Prostate gland (tissue), 2 donors: ENCODE measurements at regions of chr9 and their contacts with region 1.

Region 1: GRCh38 chr9:76302947-76303940 is 91.0 kb downstream of the RFK start:
- DNase-seq: no peak
- H3K4me3 ChIP-seq: no peak overlapping the region
- H3K27ac ChIP-seq: no peak overlapping the region
- H3K4me1 ChIP-seq: no peaks in the 10 kb centered on the region
- H3K27me3 ChIP-seq: no peaks in the 10 kb centered on the region
- CTCF ChIP-seq: peak; percentile 40 to 84 (median 74)
- POLR2A ChIP-seq: no peak

Region 2: GRCh38 chr9:75265525-75265972 is 1037.7 kb before region 1 on chr9:
- intact Hi-C with region 1: loop called (anchors 5 kb)
- DNase-seq: peak; percentile 15
- H3K4me3 ChIP-seq: no peak overlapping the region
- H3K27ac ChIP-seq: no peak overlapping the region
- H3K4me1 ChIP-seq: no peaks in the 10 kb centered on the region
- H3K27me3 ChIP-seq: no peaks in the 10 kb centered on the region
- CTCF ChIP-seq: peak; percentile 60 to 88 (median 74)
- POLR2A ChIP-seq: no peak

Region 3: DNA sequence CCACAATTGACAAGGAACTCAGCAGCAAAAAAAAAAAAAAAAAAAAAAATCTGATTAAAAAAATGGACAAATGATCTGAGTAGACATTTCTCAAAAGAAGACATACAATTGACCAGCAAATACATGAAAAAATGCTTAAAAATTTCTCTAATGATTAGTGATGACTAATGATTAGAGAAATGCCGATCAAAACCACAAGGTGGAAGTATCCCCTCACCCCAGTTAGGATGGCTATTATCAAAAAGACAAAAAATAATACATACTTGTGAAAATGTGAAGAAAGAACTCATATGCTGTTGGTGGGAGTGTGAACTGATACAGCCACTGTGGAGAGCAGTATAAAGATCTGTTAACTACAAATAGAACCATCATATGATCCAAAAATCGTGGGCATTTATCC is 969.6 kb before region 1 on chr9:
- intact Hi-C with region 1: loop called (anchors 10 kb)
- DNase-seq: no peak
- H3K4me3 ChIP-seq: no peak overlapping the region
- H3K27ac ChIP-seq: no peak overlapping the region
- H3K4me1 ChIP-seq: no peaks in the 10 kb centered on the region
- H3K27me3 ChIP-seq: no peaks in the 10 kb centered on the region
- CTCF ChIP-seq: peak in 1 of 4 experiments; percentile 29
- POLR2A ChIP-seq: no peak

Region 4: GRCh38 chr9:75723560-75723959 is 579.7 kb before region 1 on chr9:
- intact Hi-C with region 1: no loop called
- DNase-seq: no peak
- H3K4me3 ChIP-seq: no peak overlapping the region
- H3K27ac ChIP-seq: no peak overlapping the region
- H3K4me1 ChIP-seq: no peaks in the 10 kb centered on the region
- H3K27me3 ChIP-seq: no peaks in the 10 kb centered on the region
- CTCF ChIP-seq: no peak
- POLR2A ChIP-seq: no peak

Region 5: DNA sequence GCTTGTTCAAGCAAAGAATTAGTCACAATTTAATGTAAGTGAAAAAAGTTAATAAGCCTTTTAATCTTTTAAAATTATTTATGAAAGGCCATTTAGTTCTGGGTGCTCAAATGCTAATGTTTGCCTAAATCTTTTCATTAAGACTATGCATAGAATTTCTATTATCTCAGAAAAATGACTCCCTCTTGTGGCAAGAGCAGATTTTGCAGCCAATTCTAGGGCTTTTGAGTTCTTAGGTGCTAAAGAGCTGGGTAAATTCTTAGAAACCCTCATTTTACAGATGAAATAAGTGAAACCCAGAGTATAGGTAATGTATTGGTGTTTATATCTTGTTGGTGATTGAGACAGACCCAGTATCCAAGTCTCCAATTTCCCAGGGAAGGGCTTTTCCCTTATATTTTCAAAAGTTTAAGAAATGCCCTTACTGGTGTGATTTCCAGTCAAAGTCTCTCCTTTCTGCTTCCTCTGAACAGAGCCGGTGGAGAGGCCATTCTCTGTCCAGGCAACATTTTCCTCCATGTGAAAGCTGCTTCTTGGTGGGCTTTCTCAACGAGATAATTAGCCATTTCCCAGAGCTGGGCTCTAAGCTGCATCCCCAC is 436.9 kb before region 1 on chr9:
- intact Hi-C with region 1: loop called (anchors 10 kb)
- DNase-seq: peak; percentile 35
- H3K4me3 ChIP-seq: no peak overlapping the region
- H3K27ac ChIP-seq: no peak overlapping the region
- H3K4me1 ChIP-seq: no peaks in the 10 kb centered on the region
- H3K27me3 ChIP-seq: no peaks in the 10 kb centered on the region
- CTCF ChIP-seq: peak; percentile 38 to 68 (median 60)
- POLR2A ChIP-seq: no peak